ENCODE measurements at regions of chr16 and their contacts with region 1.

Region 1: GRCh38 chr16:4494746-4495490 is 18.7 kb downstream of the HMOX2 start:
- DNase-seq: no peak
- ATAC-seq: peak; percentile 34
- H3K4me3 ChIP-seq: no peak overlapping the region
- H3K27ac ChIP-seq: no peak overlapping the region
- H3K4me1 ChIP-seq: peaks cover 48% of the 10 kb centered on the region
- H3K27me3 ChIP-seq: no peaks in the 10 kb centered on the region
- CTCF ChIP-seq: no peak
- POLR2A ChIP-seq: no peak

Region 2: DNA sequence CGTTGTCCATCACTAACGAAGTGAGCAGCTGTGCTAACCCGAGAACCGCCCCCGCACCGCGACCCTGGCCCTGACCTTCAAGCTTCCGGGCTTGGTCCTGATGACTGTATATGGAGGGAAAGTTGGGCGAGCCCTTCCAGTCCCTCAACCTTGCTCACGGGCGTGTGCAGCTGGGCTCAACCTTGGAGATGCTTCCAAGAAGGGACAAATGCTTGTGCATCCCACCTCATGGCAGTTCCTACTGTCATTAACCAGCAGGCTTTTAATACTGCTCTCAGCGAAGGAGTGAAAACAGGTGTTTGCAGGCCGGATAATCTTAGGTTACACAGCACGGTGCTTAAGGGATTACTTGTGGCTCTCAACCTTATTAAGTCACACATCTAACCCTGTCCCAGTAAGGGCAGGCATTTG is 286.6 kb before region 1 on chr16:
- intact Hi-C with region 1: no loop called
- DNase-seq: no peak
- ATAC-seq: no peak
- H3K4me3 ChIP-seq: no peak overlapping the region
- H3K27ac ChIP-seq: no peak overlapping the region
- H3K4me1 ChIP-seq: no peaks in the 10 kb centered on the region
- H3K27me3 ChIP-seq: no peaks in the 10 kb centered on the region
- CTCF ChIP-seq: no peak
- POLR2A ChIP-seq: no peak

Region 3: GRCh38 chr16:4435337-4436067 is 59.4 kb before region 1 on chr16:
- intact Hi-C with region 1: loop called (anchors 10 kb)
- DNase-seq: no peak
- ATAC-seq: no peak
- H3K4me3 ChIP-seq: no peak overlapping the region
- H3K27ac ChIP-seq: no peak overlapping the region
- H3K4me1 ChIP-seq: no peaks in the 10 kb centered on the region
- H3K27me3 ChIP-seq: no peaks in the 10 kb centered on the region
- CTCF ChIP-seq: no peak
- POLR2A ChIP-seq: no peak